ENCODE measurements at regions of chr4 and their contacts with region 1.

Region 1: DNA sequence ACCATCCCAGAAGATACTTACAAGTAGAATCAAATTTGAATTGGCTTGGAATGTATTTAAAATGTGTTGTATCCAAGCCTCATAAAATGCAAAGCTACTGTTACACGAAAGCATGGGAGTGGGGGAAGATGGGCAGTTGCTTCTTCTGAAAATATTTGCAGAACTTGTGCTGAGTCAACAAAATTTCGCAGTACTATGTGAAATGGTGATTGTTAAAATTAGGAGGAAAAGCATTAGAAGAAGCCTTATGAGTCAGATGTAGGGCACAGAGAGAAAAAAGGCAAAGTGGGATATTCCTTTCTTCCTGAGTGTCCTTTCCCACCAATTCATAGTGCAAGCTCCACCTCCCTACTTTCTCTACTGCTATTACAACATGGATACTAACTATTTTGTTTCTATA is 332.7 kb downstream of the PRDM5 start:
- DNase-seq: no peak

Region 2: DNA sequence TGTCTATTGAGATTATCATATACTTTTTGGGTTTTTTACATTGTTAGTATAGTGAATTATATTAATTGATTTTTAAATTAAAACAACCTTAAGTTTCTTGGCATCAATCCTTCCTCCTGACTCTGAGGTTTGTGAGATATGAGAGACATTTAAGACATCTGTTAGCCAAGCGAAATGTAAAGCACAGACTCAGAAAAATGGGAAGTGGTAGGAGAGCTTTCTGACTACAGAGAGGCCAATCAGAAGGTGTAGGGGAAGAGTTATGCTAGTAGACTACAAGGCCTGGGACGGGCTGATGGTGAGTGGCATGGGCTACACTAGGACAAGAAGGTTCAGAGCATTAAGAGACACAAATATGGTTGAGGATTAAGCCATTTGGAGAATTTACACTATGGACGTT is 77.3 kb after region 1 on chr4:
- intact Hi-C with region 1: loop called in 1 of 2 experiments (anchors 2 kb)
- DNase-seq: no peak